Activated naive CD4-positive, alpha-beta T cell treated with anti-CD3 and anti-CD28 coated beads for 36 hours (primary cell): ENCODE measurements at regions of chr16 and their contacts with region 1.

Region 1: GRCh38 chr16:28166394-28167208 is 45.2 kb downstream of the XPO6 start:
- DNase-seq: peak; percentile 60
- H3K4me3 Mint-ChIP-seq: no peak overlapping the region
- H3K27ac Mint-ChIP-seq: peak overlapping the region; percentile 90
- H3K4me1 Mint-ChIP-seq: peaks cover 85% of the 10 kb centered on the region
- H3K27me3 Mint-ChIP-seq: no peaks in the 10 kb centered on the region

Region 2: GRCh38 chr16:28053461-28053860 is 113.1 kb before region 1 on chr16:
- CTCF ChIA-PET with region 1: no interaction called
- intact Hi-C with region 1: no loop called
- DNase-seq: no peak
- H3K4me3 Mint-ChIP-seq: no peak overlapping the region
- H3K27ac Mint-ChIP-seq: no peak overlapping the region
- H3K4me1 Mint-ChIP-seq: no peaks in the 10 kb centered on the region
- H3K27me3 Mint-ChIP-seq: peaks cover 16% of the 10 kb centered on the region

Region 3: DNA sequence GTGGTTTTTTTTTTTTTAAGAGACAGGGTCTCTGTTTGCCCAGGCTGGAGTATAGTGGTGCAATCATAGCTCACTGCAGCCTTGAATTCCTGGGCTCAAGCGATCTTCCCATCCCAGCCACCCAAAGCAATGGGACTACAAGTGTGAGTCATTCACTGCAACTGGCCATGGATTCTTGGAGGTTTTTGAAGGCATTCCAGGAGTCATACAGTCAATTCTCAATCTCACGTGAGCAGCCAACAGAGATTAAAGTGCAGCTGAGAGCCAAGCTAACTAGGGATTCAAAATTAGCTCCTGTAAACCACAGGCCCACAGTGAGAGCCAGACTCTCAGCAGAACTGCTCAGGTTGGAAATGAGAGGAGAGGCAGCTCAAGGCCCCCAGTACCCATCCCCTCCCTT is 14.9 kb after region 1 on chr16:
- CTCF ChIA-PET with region 1: interaction called, 4 read pairs
- intact Hi-C with region 1: loop called (anchors 1 kb)
- DNase-seq: no peak
- H3K4me3 Mint-ChIP-seq: no peak overlapping the region
- H3K27ac Mint-ChIP-seq: peak overlapping the region; percentile 91
- H3K4me1 Mint-ChIP-seq: peaks cover 80% of the 10 kb centered on the region
- H3K27me3 Mint-ChIP-seq: no peaks in the 10 kb centered on the region

Region 4: DNA sequence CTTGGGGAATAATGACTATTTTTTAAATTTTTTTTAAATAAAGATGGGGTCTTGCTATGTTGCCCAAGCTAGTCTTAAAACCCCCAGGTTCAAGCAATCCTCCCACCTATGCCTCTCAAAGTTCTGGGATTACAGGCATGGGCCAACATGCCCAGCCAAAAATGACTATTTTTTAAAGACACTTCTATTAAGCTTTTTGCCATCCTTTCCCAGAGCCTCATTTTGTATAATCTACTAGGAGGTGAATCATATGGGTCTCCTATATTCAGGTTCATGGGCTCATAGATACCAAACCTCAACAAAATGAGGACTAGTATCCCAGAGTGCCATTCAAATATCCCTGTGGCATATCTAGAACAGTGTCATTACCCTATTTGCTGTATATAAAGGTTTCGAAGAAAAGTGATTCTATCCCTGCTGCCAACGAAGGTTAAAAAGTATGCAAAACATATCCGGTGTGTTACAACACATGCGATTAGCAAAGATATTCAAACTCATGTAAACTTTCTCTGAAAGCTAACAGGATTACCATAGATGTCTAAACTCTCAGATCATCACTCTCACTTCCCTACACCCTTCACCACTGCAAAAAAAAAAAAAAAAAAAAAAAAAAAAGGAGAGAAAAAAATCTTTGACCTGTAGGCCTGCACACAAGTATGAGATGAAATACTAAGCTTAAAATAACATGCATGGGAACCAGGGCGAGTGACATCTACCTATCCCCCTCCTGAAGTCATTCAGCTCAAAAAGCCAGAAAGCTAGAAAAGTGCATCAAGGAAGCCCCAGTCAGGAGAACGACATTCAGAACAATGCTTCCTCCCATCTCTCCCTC is 21.7 kb after region 1 on chr16:
- CTCF ChIA-PET with region 1: interaction called, 4 read pairs
- intact Hi-C with region 1: loop called (anchors 1 kb)
- DNase-seq: no peak
- H3K4me3 Mint-ChIP-seq: peak overlapping the region; percentile 43
- H3K27ac Mint-ChIP-seq: peak overlapping the region; percentile 89
- H3K4me1 Mint-ChIP-seq: peaks cover 88% of the 10 kb centered on the region
- H3K27me3 Mint-ChIP-seq: no peaks in the 10 kb centered on the region

Region 5: GRCh38 chr16:28193530-28194423 is 27.2 kb after region 1 on chr16:
- CTCF ChIA-PET with region 1: interaction called, 3 read pairs
- intact Hi-C with region 1: loop called (anchors 1 kb)
- DNase-seq: peak; percentile 77
- H3K4me3 Mint-ChIP-seq: peak overlapping the region; percentile 71
- H3K27ac Mint-ChIP-seq: peak overlapping the region; percentile 93
- H3K4me1 Mint-ChIP-seq: peaks cover 79% of the 10 kb centered on the region
- H3K27me3 Mint-ChIP-seq: no peaks in the 10 kb centered on the region

Region 6: DNA sequence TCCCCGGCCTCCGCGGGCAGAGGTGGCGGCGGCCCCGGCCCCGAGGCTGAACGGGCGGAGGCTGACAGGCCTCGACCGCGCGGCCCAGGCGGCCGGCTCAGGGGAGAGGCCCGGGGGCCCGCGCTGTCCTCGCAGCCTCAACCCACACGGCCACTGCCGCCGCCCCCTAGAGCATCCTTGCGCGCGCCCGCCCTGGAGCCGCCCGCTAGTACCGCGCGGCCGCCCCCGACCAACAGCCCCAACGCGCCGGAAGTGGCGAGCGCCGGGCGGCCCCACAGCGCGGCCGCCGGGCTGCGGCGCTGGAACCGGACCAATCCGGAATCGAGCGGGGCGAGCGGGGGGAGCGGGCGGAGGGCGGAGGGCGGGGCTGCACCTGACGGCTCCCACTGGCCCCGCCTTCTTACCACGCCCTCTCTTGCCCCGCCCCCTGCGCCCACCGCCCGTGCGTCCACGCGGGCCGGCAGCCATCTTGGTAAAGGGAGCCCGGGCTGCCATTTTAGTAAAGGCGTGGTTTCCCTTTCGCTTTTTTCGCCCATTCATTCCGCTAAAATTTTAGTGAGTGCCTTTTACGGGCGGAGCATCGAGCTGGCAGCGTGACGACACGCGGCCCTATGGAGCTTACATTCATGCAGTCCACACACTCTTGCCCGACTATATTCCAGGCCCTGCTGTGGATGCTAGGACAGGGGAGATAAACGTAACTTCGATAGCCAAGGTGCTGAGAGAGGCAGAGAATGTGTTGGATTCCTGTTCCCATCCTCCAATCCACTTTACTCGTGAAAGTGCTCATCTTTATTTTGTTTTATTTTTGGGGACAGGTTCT is 45.3 kb after region 1 on chr16 and contains the start of gene XPO6:
- CTCF ChIA-PET with region 1: interaction called, 6 read pairs
- intact Hi-C with region 1: loop called (anchors 1 kb)
- DNase-seq: peak; percentile 99
- H3K4me3 Mint-ChIP-seq: peak within 1 kb of the TSS; percentile 96
- H3K27ac Mint-ChIP-seq: peak within 1 kb of the TSS; percentile 93
- H3K4me1 Mint-ChIP-seq: peaks cover 29% of the 10 kb centered on the region
- H3K27me3 Mint-ChIP-seq: no peaks in the 10 kb centered on the region
- total RNA-seq, gene XPO6: 215 to 229 TPM